Caco-2 (cell line): ENCODE measurements at regions of chr1 and their contacts with region 1.

Region 1: DNA sequence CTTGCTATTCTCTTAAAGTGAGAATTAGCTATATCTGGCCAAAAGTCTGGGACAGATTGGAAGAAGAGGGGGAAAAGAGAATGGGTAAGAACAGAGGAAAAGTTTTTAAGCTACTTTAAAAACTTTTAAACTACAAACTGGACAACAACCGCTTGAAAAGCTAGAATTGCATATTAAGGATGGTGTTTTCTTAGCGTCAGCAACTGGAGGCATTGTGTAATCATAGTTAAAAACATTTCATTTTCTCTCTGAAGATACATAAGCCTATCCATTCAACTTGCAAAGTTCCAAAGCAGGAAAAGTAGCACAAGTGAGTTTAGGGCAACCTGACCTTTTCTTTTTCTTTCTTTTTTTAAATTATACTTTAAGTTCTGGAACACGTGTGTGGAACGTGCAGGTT is 10.9 kb downstream of the PBX1 start:
- DNase-seq: no peak
- H3K4me3 ChIP-seq: no peak overlapping the region
- H3K4me3 Mint-ChIP-seq: no peak overlapping the region
- H3K27ac Mint-ChIP-seq: no peak overlapping the region
- H3K4me1 ChIP-seq: 0 out of 2 replicates have a peak, but pooled peaks cover 3% of the 10 kb centered on the region
- H3K4me1 Mint-ChIP-seq: peaks cover 21% of the 10 kb centered on the region
- H3K27me3 ChIP-seq: no peaks in the 10 kb centered on the region
- H3K27me3 Mint-ChIP-seq: no peaks in the 10 kb centered on the region
- CTCF ChIP-seq: no peak

Region 2: DNA sequence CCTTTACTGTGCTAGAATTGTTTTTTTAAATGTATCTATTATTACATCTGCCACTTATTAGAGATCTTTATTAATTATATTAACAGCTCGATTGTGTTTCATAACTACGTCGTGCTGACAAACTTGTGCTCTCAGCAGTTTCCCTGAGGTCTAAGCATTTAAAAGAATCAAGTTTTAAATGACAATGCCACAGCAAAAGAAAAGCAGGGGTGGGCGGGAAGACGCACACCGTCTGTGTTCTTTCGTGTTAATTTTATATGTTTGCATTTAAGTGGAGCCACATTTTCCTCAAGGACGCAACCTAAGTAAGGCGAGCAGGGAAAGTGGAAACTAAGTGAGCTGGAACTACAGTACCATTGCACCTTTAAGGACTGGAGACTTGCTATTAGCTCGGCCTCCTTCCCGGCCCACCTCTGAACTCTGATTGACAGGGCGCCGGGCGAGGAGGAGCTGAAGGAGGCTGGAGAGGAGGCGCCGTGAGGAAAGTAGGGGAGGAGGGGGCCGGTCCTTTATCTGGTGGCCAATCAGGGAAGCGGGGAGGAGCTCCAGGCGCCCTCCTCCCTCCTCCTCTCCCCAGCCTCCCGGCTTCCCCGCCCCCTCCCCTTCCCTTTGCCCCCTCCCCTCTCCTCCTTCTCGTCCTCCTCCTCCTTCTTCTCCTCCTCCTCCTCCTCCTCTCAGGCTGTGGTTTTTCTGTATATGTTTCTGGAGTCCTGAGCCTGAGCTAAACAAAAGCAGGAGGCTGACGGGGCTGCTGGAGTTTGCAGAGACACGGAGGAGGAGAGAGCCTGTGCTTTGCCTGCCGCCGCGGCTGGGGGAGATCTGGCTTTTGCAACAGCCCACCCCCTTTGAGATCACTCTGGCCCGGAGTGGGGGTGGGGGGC is 11.2 kb before region 1 on chr1 and contains the start of gene PBX1:
- CTCF ChIA-PET with region 1: interaction called, 3 read pairs
- POLR2A ChIA-PET with region 1: interaction called, 14 read pairs
- intact Hi-C with region 1: no loop called
- DNase-seq: peak; percentile 97 to 99
- H3K4me3 ChIP-seq: peak within 1 kb of the TSS; percentile 74
- H3K4me3 Mint-ChIP-seq: peak within 1 kb of the TSS; percentile 81
- H3K27ac Mint-ChIP-seq: peak within 1 kb of the TSS; percentile 46
- H3K4me1 ChIP-seq: peaks cover 20% of the 10 kb centered on the region
- H3K4me1 Mint-ChIP-seq: peaks cover 7% of the 10 kb centered on the region
- H3K27me3 ChIP-seq: no peaks in the 10 kb centered on the region
- H3K27me3 Mint-ChIP-seq: no peaks in the 10 kb centered on the region
- CTCF ChIP-seq: no peak
- total RNA-seq, gene PBX1: 101 and 103 TPM in 2 replicates